ENCODE measurements at regions of chr6 and their contacts with region 1.

Region 1: DNA sequence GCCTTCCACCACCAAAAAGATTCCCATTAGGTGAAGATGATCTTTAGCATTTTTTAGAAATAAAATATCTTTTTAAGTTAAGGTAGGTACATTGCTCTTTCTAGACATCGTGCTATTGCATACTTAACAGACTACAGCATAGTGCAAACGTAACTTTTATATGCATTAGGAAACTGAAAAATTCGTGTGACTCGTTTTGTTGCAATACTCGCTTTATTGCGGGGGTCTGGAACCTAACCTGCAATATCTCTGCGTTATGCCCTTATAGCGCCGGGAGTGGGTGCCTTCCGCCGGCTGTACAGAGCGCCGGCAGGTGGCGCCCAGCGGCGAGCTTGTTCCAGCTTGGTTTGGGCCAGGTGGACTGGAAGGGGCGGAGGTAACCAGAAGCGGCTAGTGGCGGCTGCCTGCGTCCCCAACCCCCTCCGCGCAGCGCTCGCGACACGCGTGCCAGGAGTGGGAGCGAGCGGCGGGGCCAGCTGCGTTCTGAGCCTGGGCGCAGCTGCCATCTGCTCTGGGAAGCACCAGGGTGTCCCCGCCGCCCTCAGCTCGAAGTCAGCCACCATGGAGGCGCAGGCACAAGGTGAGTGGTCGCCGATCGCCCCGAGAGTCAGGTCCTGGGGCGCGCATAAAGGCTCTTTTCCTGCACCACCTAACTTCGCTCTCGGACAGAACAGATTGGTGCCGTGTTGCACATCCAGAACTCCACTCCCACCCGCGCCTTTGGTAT is at the start of gene TPD52L1:
- DNase-seq: peak; percentile 74
- H3K4me3 ChIP-seq: peak within 1 kb of the TSS; percentile 70 to 90 (median 77)
- H3K27ac ChIP-seq: peak within 1 kb of the TSS; percentile 55
- H3K4me1 ChIP-seq: peaks cover 35% of the 10 kb centered on the region
- H3K27me3 ChIP-seq: no peaks in the 10 kb centered on the region
- CTCF ChIP-seq: peak; percentile 91 to 97
- total RNA-seq, gene TPD52L1: 115 to 269 TPM

Region 2: DNA sequence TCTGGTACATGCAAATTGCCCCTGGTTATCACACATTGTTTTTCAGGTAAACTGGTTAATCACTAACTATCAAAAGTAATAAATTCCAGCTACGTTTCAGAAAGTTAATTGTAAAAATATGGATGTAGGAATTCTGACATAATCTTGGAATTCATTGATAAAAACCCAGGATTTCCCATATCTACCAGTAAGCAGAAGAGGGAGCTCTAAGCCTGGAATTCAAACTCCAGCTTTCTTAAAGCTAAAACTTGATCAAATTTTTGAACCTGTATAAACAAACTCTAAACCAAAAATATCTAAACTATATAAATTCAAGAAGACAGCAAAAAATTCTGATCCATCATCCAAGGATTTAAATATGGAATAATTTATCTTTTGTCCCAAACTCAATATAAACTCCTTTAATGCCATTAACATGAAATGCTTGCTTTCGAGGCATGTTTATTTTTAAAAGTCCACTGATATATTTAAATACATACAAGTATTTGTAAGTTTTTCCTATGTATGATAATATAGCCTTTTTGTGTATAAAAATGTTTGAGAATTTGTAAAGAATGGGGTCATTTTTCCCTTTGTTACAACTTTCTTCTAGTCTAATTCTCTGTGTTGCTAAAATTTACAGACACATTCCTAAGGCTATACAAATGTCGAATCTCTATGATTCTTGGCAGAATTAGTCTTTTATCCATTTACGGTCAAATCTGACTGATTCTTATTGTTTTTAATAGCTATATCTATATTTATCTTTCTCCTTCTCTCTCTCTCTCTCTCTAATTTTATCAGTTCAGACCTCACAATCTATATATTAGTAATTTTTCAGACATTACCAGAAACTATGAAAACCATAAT is 282.7 kb before region 1 on chr6:
- CTCF ChIA-PET with region 1: no interaction called
- dilution Hi-C with region 1: no loop called
- in situ Hi-C with region 1: no loop called
- intact Hi-C with region 1: loop called (anchors 1 kb)
- DNase-seq: peak; percentile 12
- H3K4me3 ChIP-seq: no peak overlapping the region
- H3K27ac ChIP-seq: no peak overlapping the region
- H3K4me1 ChIP-seq: peaks cover 5% of the 10 kb centered on the region
- H3K27me3 ChIP-seq: no peaks in the 10 kb centered on the region
- CTCF ChIP-seq: peak; percentile 54 to 63

Region 3: DNA sequence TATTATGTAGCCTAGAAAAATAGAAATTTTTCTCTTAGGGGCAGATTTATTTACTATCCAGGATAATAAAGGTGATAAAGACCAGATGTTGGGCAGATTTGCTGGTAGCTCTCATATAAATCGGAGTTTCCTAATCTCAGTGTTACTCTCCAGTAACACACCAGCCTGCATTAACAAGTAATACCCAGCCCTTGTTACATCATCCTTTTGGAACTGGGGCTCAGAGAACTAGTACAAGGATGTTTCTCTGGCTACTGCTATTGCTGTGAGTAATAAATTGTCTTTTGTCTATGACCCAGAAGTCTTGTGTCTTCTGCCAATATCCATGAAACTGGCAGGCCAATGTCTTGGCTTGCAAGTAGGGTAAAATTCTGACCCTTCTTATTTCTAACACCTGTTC is 16.8 kb after region 1 on chr6:
- CTCF ChIA-PET with region 1: no interaction called
- dilution Hi-C with region 1: no loop called
- in situ Hi-C with region 1: no loop called
- intact Hi-C with region 1: no loop called
- DNase-seq: peak; percentile 75
- H3K4me3 ChIP-seq: no peak overlapping the region
- H3K27ac ChIP-seq: peak overlapping the region; percentile 42
- H3K4me1 ChIP-seq: peaks cover 5% of the 10 kb centered on the region
- H3K27me3 ChIP-seq: no peaks in the 10 kb centered on the region
- CTCF ChIP-seq: no peak

Region 4: DNA sequence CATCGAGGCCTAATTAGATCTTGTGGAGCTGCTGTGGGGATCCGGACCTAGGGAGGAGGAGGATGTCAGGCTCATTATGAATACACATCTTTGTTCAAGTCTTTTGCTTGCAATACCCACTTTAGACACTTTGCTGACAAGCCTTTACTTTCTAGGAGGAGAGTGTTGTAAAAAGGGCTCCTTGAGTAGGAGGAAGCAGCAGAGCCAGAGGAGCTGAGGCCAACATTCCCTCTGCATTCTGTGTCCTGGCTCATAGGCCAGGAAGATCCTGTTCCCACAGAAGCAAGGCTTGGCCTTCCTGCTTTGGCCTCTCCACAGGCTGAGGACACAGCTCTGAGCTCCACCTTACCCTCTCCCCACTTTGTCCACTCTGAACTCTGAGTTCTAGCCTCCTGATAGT is 67.2 kb after region 1 on chr6:
- CTCF ChIA-PET with region 1: no interaction called
- dilution Hi-C with region 1: no loop called
- in situ Hi-C with region 1: no loop called
- intact Hi-C with region 1: no loop called
- DNase-seq: peak; percentile 32
- H3K4me3 ChIP-seq: no peak overlapping the region
- H3K27ac ChIP-seq: no peak overlapping the region
- H3K4me1 ChIP-seq: peaks cover 7% of the 10 kb centered on the region
- H3K27me3 ChIP-seq: no peaks in the 10 kb centered on the region
- CTCF ChIP-seq: no peak

Region 5: GRCh38 chr6:125258651-125259349 is 105.2 kb after region 1 on chr6:
- CTCF ChIA-PET with region 1: no interaction called
- dilution Hi-C with region 1: no loop called
- in situ Hi-C with region 1: loop called in 1 of 2 experiments (anchors 25 kb)
- intact Hi-C with region 1: loop called (anchors 5 kb)
- DNase-seq: no peak
- H3K4me3 ChIP-seq: no peak overlapping the region
- H3K27ac ChIP-seq: no peak overlapping the region
- H3K4me1 ChIP-seq: peaks cover 16% of the 10 kb centered on the region
- H3K27me3 ChIP-seq: no peaks in the 10 kb centered on the region
- CTCF ChIP-seq: no peak

Region 6: DNA sequence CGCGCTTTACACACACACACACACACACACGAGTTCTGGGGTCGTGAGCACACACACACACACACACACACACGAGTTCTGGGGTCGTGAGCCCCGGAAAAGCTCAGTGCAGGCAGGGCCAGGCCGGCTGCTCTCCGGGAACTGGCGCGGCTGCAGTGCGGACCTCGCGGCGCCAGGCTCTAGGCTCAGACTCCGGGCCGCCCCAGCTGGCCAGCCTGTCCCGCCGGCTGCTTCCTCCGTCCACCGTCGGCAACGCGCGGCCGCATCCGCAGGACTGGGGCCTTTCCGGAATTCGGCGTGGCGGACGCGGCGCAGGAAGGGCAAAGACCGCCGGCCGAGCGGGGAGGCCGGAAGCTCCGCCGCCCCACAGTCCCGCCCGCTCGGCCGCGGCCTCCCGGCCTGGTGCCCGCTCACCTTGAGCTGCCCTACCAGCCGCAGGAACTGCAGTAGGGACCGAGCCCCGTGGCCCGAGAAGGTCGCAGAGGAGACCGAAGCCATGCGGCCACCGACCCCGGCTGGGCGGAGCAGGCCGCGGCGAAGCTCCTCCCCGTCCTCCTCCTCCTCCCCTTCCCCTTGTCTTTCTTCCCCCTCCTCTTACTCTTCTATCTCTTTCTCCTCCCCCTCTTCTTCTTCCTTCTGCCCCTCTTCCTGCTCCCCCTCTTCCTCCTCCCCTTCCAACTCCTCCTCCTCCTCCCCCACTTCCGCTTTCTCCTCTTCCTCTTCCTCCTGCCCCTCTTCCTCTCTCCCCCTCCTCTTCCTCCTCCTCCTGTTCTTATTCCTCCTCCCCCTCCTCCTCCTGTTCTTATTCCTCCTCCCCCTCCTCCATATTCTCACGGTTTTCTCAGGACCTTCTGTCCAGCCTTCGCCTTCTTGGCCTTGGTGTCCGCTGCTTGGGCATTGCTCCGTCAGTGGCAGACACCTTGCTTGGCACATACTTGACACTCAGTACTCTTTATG is 148.2 kb after region 1 on chr6 and contains the start of gene HDDC2:
- CTCF ChIA-PET with region 1: no interaction called
- dilution Hi-C with region 1: no loop called
- in situ Hi-C with region 1: no loop called
- intact Hi-C with region 1: loop called (anchors 1 kb)
- DNase-seq: peak; percentile 62
- H3K4me3 ChIP-seq: peak within 1 kb of the TSS; percentile 66 to 83 (median 81)
- H3K27ac ChIP-seq: peak within 1 kb of the TSS; percentile 27
- H3K4me1 ChIP-seq: peaks cover 2% of the 10 kb centered on the region
- H3K27me3 ChIP-seq: no peaks in the 10 kb centered on the region
- CTCF ChIP-seq: no peak
- total RNA-seq, gene HDDC2: 39.5 to 76.6 TPM

Region 7: GRCh38 chr6:125773387-125774341 is 620.1 kb after region 1 on chr6:
- CTCF ChIA-PET with region 1: no interaction called
- dilution Hi-C with region 1: no loop called
- in situ Hi-C with region 1: loop called (anchors 25 kb)
- intact Hi-C with region 1: loop called (anchors 5 kb)
- DNase-seq: peak; percentile 74
- H3K4me3 ChIP-seq: no peak overlapping the region
- H3K27ac ChIP-seq: no peak overlapping the region
- H3K4me1 ChIP-seq: no peaks in the 10 kb centered on the region
- H3K27me3 ChIP-seq: peaks cover 6% of the 10 kb centered on the region
- CTCF ChIP-seq: no peak

Measured in mammary epithelial cell (primary cell).